Motor neuron (in vitro differentiated cells): ENCODE measurements at regions of chr10 and their contacts with region 1.

Region 1: GRCh38 chr10:77649333-77650331 is 12.0 kb upstream of the KCNMA1 start:
- ATAC-seq: no peak
- H3K4me3 ChIP-seq: no peak overlapping the region
- H3K27ac ChIP-seq: no peak overlapping the region
- H3K4me1 ChIP-seq: peaks cover 20 to 25% of the 10 kb centered on the region in 2 donors

Region 2: DNA sequence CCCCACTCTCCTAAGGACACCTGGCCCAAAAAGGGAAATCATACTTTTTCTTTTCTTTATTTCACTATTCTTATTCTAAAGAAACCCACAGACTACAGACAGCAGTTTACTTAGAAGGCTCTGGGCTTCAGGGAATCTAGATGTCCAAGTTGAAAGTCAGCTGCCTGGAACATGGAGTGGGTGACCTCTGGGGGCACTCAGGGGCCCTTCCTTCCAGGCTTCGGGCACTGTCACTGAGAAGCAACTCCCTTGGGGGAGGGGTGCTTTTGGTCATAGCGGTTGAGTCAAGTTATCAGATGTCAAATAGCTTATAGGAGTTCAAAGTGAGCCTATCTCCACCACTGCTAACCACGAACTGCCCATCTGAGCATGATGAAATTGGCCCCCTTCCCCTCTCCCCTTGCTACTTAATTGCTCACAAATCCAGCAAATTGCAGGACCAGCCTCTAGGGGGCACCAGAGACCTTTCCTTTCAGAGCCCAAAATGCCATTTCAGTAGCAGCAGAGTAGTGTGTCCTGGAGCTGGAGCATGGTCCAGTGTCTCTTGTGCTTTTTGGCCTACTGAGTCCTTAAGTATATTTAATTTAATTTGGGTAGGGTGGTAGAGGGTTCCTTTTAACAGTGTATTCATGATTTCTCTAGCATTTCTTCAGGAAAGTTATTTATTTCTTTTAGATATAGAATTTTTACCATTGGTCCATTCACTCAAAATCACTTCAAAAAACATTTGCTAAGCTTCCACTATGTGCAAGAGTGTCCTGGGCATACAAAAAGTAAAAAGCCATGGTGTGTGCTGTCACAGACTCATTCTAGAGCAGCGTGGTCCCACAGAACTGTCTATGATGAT is 475.8 kb before region 1 on chr10:
- in situ Hi-C with region 1: loop called (anchors 5 to 25 kb)
- ATAC-seq: peak; percentile 74 to 93 (median 87)
- H3K4me3 ChIP-seq: no peak overlapping the region
- H3K27ac ChIP-seq: no peak overlapping the region
- H3K4me1 ChIP-seq: no peaks in the 10 kb centered on the region

Region 3: DNA sequence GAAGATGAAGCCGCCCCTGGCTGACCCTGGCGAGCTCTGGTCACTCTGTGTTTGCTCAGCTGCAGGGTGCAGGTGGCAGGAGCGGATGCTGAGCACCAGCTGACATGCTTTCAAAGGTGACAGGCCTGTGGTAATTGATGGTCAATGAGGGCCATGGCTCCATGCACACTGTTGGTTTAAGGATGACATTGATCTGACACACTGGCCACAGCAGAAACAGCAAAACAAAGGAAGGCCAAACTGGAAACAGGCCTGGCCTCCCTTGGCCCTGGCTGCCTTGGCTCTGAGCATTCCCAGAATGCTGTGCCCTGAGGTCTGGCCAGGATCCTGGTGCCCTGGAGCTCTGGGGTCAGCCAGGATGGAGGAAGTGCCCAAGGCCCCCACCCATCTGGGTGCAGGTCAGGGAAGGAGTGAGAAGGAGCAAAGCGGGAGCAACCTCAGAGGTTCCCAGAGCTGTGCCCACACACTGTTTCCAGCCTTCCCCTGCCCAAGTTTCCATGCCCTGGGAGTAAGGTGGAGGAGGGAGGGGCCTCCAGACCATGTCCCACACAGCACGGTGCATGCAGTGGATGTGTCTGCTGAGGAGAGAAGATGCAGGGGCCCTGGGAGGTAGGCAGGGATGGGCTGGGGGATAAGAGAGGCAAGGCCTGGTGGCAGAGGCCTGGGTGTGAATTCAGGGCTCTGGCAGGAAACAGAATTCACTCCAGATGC is 686.2 kb after region 1 on chr10:
- in situ Hi-C with region 1: no loop called
- ATAC-seq: peak in 5 of 8 experiments; percentile 47 to 82 (median 58)
- H3K4me3 ChIP-seq: no peak overlapping the region
- H3K27ac ChIP-seq: peak overlapping the region; percentile 22 to 71
- H3K4me1 ChIP-seq: peaks cover 15 to 22% of the 10 kb centered on the region in 2 donors